Activated CD4-positive, alpha-beta memory T cell treated with anti-CD3 and anti-CD28 coated beads, Interleukin-2, amount 10 ng/mL, durations not matched to agents 7 days and 5 days (primary cell): ENCODE measurements at regions of chr10 and their contacts with region 1.

Region 1: DNA sequence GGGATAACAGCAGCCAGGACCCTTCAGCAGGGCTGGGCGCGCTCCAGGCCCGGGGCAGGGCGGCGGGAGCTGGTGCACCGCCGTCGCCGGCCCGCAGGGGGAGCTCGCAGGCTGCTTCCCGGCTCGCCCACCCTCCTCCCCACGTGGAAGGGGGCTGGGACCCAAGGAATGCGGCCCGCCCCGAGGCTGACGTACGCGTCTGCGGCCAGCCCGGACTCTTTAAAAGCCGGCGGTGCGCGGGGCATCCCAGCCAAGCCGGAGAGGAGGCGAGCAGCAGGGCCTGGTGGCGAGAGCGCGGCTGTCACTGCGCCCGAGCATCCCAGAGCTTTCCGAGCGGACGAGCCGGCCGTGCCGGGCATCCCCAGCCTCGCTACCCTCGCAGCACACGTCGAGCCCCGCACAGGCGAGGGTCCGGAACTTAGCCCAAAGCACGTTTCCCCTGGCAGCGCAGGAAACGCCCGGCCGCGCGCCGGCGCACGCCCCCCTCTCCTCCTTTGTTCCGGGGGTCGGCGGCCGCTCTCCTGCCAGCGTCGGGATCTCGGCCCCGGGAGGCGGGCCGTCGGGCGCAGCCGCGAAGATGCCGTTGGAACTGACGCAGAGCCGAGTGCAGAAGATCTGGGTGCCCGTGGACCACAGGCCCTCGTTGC is at the start of gene PFKFB3:
- DNase-seq: peak; percentile 93
- H3K4me3 Mint-ChIP-seq: peak within 1 kb of the TSS; percentile 96
- H3K27ac Mint-ChIP-seq: peak within 1 kb of the TSS; percentile 91
- H3K4me1 Mint-ChIP-seq: peaks cover 39% of the 10 kb centered on the region
- H3K27me3 Mint-ChIP-seq: peaks cover 2% of the 10 kb centered on the region
- total RNA-seq, gene PFKFB3: 66.8 to 69.4 TPM

Region 2: GRCh38 chr10:6136215-6137201 is 66.3 kb before region 1 on chr10:
- CTCF ChIA-PET with region 1: interaction called, 14 read pairs
- POLR2A ChIA-PET with region 1: interaction called, 4 read pairs
- DNase-seq: peak; percentile 59
- H3K4me3 Mint-ChIP-seq: peak overlapping the region; percentile 30
- H3K27ac Mint-ChIP-seq: peak overlapping the region; percentile 56
- H3K4me1 Mint-ChIP-seq: peaks cover 66% of the 10 kb centered on the region
- H3K27me3 Mint-ChIP-seq: peaks cover 27% of the 10 kb centered on the region

Region 3: GRCh38 chr10:6163364-6164270 is 39.2 kb before region 1 on chr10:
- CTCF ChIA-PET with region 1: interaction called, 9 read pairs
- POLR2A ChIA-PET with region 1: interaction called, 16 read pairs
- DNase-seq: peak; percentile 93
- H3K4me3 Mint-ChIP-seq: peak overlapping the region; percentile 87
- H3K27ac Mint-ChIP-seq: peak overlapping the region; percentile 93
- H3K4me1 Mint-ChIP-seq: peaks cover 50% of the 10 kb centered on the region
- H3K27me3 Mint-ChIP-seq: no peaks in the 10 kb centered on the region

Region 4: DNA sequence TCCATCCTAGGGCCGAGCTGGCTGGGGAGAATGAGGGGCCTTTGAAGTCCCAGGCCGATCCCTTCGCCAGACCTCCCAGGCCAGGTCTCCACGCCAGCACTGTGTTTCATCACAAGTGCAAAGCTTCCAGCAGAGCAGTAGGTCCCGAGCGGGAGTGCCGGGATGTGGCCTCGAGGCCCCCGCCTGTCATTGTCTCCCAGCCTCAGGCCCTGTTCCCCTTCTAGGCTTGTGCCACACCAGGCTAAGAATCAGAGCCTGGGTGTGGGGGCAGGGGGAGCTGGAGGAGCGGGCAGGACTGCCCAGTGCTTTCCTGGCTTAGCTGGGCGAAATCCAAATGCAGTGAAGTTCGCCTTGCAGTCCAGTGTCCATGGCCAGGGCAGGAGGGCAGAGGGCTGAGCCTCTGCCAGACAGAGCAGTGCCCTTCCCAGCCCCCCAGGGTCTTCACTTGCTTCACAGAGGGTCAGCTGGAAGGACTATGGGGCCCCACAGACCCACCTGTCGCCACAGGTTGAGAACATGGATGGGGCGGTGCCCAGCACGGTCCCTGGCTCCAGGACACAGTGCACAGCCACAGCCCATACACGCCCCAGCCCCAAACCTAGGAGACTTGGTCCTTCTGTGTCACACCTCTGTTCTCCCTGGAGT is 20.2 kb before region 1 on chr10:
- CTCF ChIA-PET with region 1: interaction called, 12 read pairs
- POLR2A ChIA-PET with region 1: interaction called, 7 read pairs
- DNase-seq: no peak
- H3K4me3 Mint-ChIP-seq: no peak overlapping the region
- H3K27ac Mint-ChIP-seq: no peak overlapping the region
- H3K4me1 Mint-ChIP-seq: peaks cover 25% of the 10 kb centered on the region
- H3K27me3 Mint-ChIP-seq: no peaks in the 10 kb centered on the region

Region 5: DNA sequence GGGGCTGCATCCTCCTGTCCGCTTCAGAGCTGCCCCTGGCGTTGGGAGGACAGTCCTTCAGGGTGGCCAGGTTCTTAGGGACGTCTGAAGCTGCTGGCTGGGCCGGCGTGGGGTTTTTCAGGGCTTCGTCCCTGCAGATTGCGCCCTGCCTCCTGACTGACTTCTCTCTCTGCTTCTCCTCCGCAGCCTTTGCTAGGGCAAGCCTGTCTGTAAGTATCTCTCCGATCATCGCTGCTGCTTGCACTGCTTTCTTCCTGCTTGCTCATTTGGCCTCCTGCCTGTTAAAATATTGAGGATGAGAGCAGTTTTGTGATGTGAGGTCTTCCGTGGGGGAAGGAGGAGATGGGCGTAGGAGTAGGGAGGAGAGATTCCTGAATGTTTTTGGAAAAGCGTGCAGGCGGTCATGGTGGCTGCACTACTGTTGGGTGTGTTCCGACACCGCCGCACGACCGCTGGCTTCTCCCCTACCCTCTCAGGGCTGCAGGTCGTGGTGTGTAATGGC is 25.3 kb after region 1 on chr10:
- CTCF ChIA-PET with region 1: no interaction called
- POLR2A ChIA-PET with region 1: no interaction called
- DNase-seq: no peak
- H3K4me3 Mint-ChIP-seq: no peak overlapping the region
- H3K27ac Mint-ChIP-seq: peak overlapping the region; percentile 21
- H3K4me1 Mint-ChIP-seq: peaks cover 5% of the 10 kb centered on the region
- H3K27me3 Mint-ChIP-seq: no peaks in the 10 kb centered on the region

Region 6: GRCh38 chr10:6292741-6293151 is 89.9 kb after region 1 on chr10:
- CTCF ChIA-PET with region 1: no interaction called
- POLR2A ChIA-PET with region 1: no interaction called
- DNase-seq: no peak
- H3K4me3 Mint-ChIP-seq: no peak overlapping the region
- H3K27ac Mint-ChIP-seq: peak overlapping the region; percentile 54
- H3K4me1 Mint-ChIP-seq: peaks cover 48% of the 10 kb centered on the region
- H3K27me3 Mint-ChIP-seq: no peaks in the 10 kb centered on the region

Region 7: GRCh38 chr10:6320320-6321010 is 117.7 kb after region 1 on chr10:
- CTCF ChIA-PET with region 1: no interaction called
- POLR2A ChIA-PET with region 1: no interaction called
- DNase-seq: no peak
- H3K4me3 Mint-ChIP-seq: no peak overlapping the region
- H3K27ac Mint-ChIP-seq: no peak overlapping the region
- H3K4me1 Mint-ChIP-seq: no peaks in the 10 kb centered on the region
- H3K27me3 Mint-ChIP-seq: no peaks in the 10 kb centered on the region

Region 8: DNA sequence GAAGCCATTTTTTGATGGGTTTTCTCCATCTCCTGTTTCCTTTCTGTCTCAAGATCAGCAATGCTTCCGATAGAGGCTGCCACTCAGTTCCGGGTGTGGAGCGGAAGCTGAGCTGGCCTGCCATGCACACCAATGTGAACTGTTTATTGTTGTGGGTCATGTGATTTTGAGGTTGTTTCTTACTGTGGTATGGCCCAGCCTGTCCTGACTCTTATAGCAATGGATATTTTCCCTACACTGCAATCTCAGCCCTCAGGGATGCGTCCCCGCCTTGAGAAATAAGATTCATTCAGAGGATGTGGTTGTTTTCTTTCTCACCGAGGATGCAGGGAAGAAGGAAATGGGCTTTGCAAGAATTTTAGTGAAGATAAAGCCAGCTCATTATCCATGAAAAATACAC is 134.6 kb after region 1 on chr10:
- CTCF ChIA-PET with region 1: no interaction called
- POLR2A ChIA-PET with region 1: no interaction called
- DNase-seq: no peak
- H3K4me3 Mint-ChIP-seq: no peak overlapping the region
- H3K27ac Mint-ChIP-seq: no peak overlapping the region
- H3K4me1 Mint-ChIP-seq: no peaks in the 10 kb centered on the region
- H3K27me3 Mint-ChIP-seq: no peaks in the 10 kb centered on the region

Region 9: GRCh38 chr10:6348096-6348874 is 145.5 kb after region 1 on chr10:
- CTCF ChIA-PET with region 1: interaction called, 22 read pairs
- POLR2A ChIA-PET with region 1: interaction called, 29 read pairs
- DNase-seq: peak; percentile 87
- H3K4me3 Mint-ChIP-seq: peak overlapping the region; percentile 64
- H3K27ac Mint-ChIP-seq: peak overlapping the region; percentile 92
- H3K4me1 Mint-ChIP-seq: peaks cover 47% of the 10 kb centered on the region
- H3K27me3 Mint-ChIP-seq: peaks cover 3% of the 10 kb centered on the region

Region 10: DNA sequence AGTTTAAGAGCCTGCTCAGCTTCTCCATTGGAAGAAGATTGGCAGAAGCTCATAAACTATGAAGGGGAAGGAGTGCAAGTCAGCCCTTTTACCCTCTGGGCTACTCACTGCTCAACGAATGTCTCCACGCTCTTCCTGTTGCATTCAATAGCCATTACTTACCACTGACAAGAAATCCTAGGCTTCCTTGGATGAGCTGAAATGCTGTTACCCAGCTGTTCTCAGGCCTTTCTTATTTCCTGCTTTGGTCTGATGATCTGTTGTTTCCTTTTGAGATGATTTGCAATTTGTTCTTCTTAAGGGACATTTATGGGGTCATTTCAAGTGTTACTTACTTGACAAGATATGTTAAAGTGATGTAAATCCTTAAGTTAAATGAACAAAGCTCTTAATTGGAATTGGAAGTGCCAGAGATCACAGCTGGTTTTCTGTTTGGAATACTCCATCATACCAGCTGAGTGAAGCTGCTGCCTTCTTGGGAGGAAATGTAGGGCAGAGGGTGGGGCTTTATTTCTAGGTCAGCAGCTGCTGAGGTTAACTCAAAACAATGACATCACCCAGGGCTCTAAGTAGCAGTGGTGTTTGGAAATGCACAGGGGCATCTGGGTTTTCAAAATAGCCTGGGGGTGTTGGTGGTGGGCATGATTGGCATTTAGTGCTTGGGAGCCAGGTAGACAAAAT is 207.3 kb after region 1 on chr10:
- CTCF ChIA-PET with region 1: interaction called, 47 read pairs
- POLR2A ChIA-PET with region 1: interaction called, 22 read pairs
- DNase-seq: peak; percentile 67
- H3K4me3 Mint-ChIP-seq: peak overlapping the region; percentile 68
- H3K27ac Mint-ChIP-seq: peak overlapping the region; percentile 88
- H3K4me1 Mint-ChIP-seq: peaks cover 54% of the 10 kb centered on the region
- H3K27me3 Mint-ChIP-seq: peaks cover 2% of the 10 kb centered on the region